ENCODE measurements at regions of chr9 and their contacts with region 1.

Region 1: GRCh38 chr9:76393963-76394679 is at the start of gene RFK:
- DNase-seq: peak; percentile 96
- ATAC-seq: peak; percentile 89
- H3K4me3 Mint-ChIP-seq: peak within 1 kb of the TSS; percentile 85
- H3K27ac Mint-ChIP-seq: peak within 1 kb of the TSS; percentile 95
- H3K4me1 Mint-ChIP-seq: peaks cover 26% of the 10 kb centered on the region
- H3K27me3 Mint-ChIP-seq: no peaks in the 10 kb centered on the region
- total RNA-seq, gene RFK: 7.0 to 8.3 TPM

Region 2: GRCh38 chr9:74952281-74953151 is 1441.6 kb before region 1 on chr9 and contains the start of gene C9orf40:
- CTCF ChIA-PET with region 1: no interaction called
- POLR2A ChIA-PET with region 1: no interaction called
- intact Hi-C with region 1: loop called in 1 of 2 experiments (anchors 10 kb)
- DNase-seq: peak; percentile 95
- ATAC-seq: peak; percentile 93
- H3K4me3 Mint-ChIP-seq: peak within 1 kb of the TSS; percentile 93
- H3K27ac Mint-ChIP-seq: peak within 1 kb of the TSS; percentile 96
- H3K4me1 Mint-ChIP-seq: peaks cover 28% of the 10 kb centered on the region
- H3K27me3 Mint-ChIP-seq: no peaks in the 10 kb centered on the region
- total RNA-seq, gene C9orf40: 14.0 to 19.7 TPM

Region 3: GRCh38 chr9:75890472-75891276 is 503.4 kb before region 1 on chr9 and contains the start of gene PCSK5:
- CTCF ChIA-PET with region 1: no interaction called
- POLR2A ChIA-PET with region 1: no interaction called
- intact Hi-C with region 1: loop called in 1 of 2 experiments (anchors 2 kb)
- DNase-seq: peak; percentile 91
- ATAC-seq: peak; percentile 82
- H3K4me3 Mint-ChIP-seq: peak within 1 kb of the TSS; percentile 93
- H3K27ac Mint-ChIP-seq: peak within 1 kb of the TSS; percentile 76
- H3K4me1 Mint-ChIP-seq: peaks cover 31% of the 10 kb centered on the region
- H3K27me3 Mint-ChIP-seq: peaks cover 4% of the 10 kb centered on the region
- total RNA-seq, gene PCSK5: 3.0 to 3.1 TPM

Region 4: DNA sequence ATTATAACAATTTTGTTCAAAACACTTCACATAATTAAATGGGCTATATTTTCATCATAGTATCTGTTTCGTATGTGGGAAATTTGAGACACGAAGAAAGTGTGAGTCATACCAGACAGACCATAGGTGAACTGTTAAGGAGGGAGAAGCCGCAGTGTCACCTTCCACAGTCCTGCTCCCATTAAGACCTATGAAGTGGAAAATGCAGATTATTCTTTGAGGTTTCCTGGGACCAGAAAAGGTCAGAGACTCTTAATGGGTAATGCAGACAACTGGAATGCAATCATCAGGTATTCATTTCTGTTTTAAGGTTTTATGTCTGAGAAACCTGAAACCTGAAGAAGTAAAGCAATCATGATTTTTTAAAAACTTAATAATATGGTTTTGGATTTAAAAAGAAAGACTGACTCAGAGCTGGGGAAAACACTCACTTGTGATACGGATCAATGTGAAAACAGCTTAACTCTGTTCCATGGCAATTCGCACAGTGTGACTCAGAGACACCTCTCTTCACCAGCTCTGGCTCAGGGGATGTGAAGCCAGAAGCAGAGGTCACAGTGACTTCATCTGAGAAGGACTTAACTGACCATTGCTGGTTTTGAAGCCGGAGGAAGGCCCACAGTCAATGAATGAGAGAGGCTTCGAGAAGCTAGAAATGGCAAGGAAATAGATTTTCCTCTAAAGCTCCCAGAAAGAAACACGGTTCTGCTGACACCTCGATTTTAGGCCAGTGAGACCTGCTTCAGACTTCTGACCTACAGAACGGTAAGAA is 47.6 kb after region 1 on chr9:
- CTCF ChIA-PET with region 1: interaction called, 6 read pairs
- POLR2A ChIA-PET with region 1: interaction called, 3 read pairs
- intact Hi-C with region 1: loop called (anchors 2 kb)
- DNase-seq: peak; percentile 70
- ATAC-seq: peak; percentile 83
- H3K4me3 Mint-ChIP-seq: peak overlapping the region; percentile 80
- H3K27ac Mint-ChIP-seq: peak overlapping the region; percentile 96
- H3K4me1 Mint-ChIP-seq: peaks cover 51% of the 10 kb centered on the region
- H3K27me3 Mint-ChIP-seq: peaks cover 5% of the 10 kb centered on the region

Region 5: DNA sequence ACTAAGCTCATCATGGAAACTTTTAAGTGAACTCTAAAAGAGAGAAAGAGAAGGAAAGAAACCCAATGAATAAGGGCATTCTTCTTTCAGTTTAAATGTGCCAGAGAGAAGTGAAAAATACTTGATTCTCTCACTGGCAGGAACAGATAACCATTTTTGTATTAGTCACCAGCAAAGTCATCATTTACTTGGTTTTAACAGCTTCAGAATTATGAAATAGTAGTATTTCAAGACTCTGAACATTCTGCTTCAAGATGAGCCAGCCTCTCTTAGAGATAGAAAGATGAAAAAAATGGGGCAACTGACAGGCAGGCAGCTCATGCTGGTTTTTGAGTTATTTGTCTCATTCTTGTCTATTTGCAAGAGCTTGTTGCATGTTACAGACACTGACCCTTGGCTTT is 168.4 kb after region 1 on chr9:
- CTCF ChIA-PET with region 1: no interaction called
- POLR2A ChIA-PET with region 1: no interaction called
- intact Hi-C with region 1: loop called in 1 of 2 experiments (anchors 2 kb)
- DNase-seq: no peak
- ATAC-seq: peak; percentile 91
- H3K4me3 Mint-ChIP-seq: no peak overlapping the region
- H3K27ac Mint-ChIP-seq: no peak overlapping the region
- H3K4me1 Mint-ChIP-seq: peaks cover 19% of the 10 kb centered on the region
- H3K27me3 Mint-ChIP-seq: peaks cover 15% of the 10 kb centered on the region

Region 6: GRCh38 chr9:77011973-77012821 is 618.1 kb after region 1 on chr9:
- CTCF ChIA-PET with region 1: no interaction called
- POLR2A ChIA-PET with region 1: no interaction called
- intact Hi-C with region 1: loop called in 1 of 2 experiments (anchors 5 kb)
- DNase-seq: peak; percentile 86
- ATAC-seq: peak; percentile 77
- H3K4me3 Mint-ChIP-seq: peak overlapping the region; percentile 46
- H3K27ac Mint-ChIP-seq: no peak overlapping the region
- H3K4me1 Mint-ChIP-seq: peaks cover 17% of the 10 kb centered on the region
- H3K27me3 Mint-ChIP-seq: peaks cover 64% of the 10 kb centered on the region

Region 7: DNA sequence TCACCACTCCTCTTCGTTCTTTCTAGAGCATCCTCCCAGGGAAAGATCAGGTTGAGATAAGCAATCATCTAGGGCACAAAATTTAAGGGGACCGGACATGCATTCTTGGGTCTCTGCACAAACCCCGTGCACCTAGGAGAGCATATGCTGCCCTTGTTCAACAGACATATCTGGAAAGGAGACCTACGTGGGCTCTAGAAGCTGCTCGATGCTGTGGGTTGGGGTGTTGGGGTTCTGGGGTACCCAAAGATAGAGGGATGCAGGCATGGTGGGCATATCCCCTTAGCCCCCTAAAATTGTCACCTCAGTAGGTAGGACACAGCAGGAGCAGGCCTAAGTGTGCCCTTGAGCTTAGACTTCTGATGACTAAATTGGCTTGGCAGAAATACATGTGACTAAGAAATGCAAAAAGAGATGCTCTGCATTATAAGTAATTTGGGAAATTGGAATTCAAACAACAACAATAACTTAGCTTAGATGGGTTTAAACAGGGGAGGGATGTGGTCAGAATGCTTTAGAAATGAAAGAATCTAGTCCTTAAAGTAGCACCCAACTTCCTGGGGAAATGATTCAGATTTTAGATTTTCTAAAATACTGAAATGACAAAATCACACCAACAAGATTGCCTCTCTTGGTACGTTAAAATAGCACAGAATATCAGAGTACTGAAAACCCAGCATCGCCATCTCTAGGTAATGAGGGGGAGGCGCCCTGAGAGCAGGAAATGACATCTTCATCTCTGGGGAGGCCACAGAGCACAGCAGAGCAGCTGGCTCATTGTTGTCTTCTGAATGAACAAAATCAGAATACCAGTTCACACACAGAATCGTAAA is 1081.7 kb after region 1 on chr9:
- CTCF ChIA-PET with region 1: no interaction called
- POLR2A ChIA-PET with region 1: no interaction called
- intact Hi-C with region 1: loop called in 1 of 2 experiments (anchors 1 kb)
- DNase-seq: peak; percentile 84
- ATAC-seq: peak; percentile 99
- H3K4me3 Mint-ChIP-seq: peak overlapping the region; percentile 9
- H3K27ac Mint-ChIP-seq: peak overlapping the region; percentile 94
- H3K4me1 Mint-ChIP-seq: peaks cover 31% of the 10 kb centered on the region
- H3K27me3 Mint-ChIP-seq: no peaks in the 10 kb centered on the region

Measured in activated CD4-positive, alpha-beta T cell treated with anti-CD3 and anti-CD28 coated beads for 36 hours (primary cell).